Right ventricle myocardium inferior (tissue), 1 donor: ENCODE measurements at regions of chr21 and their contacts with region 1.

Region 1: GRCh38 chr21:38355992-38356797 is 99.4 kb downstream of the KCNJ15 start:
- DNase-seq: peak; percentile 92
- ATAC-seq: peak; percentile 70

Region 2: GRCh38 chr21:37675202-37675801 is 680.9 kb before region 1 on chr21:
- intact Hi-C with region 1: loop called (anchors 10 kb)
- DNase-seq: peak; percentile 81
- ATAC-seq: peak; percentile 49

Region 3: DNA sequence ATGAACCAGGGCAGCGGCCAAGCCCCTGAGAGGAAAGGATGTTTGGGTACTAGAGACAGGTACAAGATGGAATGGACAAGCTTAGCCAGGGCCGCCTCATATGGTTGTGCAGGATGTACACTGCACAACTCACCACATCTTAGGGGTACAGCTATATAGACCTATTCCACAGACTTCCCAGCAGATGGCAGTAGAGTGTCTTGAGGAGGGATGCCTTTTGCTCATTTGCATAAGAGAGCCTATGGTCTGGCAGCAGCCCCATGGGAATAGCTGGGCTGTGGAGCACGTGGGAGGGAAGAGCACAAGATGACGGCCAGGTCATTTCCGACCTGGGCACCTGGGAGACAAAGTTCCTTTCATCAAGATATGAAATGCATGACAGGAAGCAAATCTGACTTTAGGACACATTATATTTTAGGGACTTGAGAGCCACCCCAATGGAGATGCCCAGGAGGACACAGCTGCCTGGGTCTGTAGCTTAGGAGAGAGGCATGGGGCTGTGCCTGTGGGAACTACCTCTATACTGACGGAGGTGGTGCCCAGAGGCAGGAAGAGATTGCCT is 655.5 kb before region 1 on chr21:
- intact Hi-C with region 1: loop called (anchors 10 kb)
- DNase-seq: peak; percentile 60
- ATAC-seq: peak; percentile 76

Region 4: GRCh38 chr21:38159355-38159754 is 196.8 kb before region 1 on chr21:
- intact Hi-C with region 1: loop called (anchors 1 kb)
- DNase-seq: no peak
- ATAC-seq: no peak

Region 5: DNA sequence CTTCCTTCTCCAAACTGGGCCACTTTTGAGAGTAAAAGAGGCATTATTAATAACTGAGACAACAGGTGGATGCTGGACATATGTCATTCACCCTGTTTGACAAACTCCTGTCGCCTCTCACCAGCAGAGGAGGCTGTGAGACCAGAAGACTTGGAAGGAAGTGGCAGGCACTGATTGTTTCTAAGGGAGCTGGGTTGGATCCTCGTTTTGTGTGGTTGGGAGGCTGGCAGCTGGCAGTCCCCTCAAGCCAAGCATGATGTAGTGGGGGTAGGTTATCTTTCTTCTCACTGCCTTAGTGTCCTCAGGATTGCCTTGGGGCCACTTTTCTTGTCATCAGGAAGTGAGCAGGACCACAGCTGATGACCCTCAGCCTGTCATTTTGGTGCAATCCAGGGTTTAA is 185.9 kb before region 1 on chr21:
- intact Hi-C with region 1: loop called (anchors 2 kb)
- DNase-seq: no peak
- ATAC-seq: no peak

Region 6: DNA sequence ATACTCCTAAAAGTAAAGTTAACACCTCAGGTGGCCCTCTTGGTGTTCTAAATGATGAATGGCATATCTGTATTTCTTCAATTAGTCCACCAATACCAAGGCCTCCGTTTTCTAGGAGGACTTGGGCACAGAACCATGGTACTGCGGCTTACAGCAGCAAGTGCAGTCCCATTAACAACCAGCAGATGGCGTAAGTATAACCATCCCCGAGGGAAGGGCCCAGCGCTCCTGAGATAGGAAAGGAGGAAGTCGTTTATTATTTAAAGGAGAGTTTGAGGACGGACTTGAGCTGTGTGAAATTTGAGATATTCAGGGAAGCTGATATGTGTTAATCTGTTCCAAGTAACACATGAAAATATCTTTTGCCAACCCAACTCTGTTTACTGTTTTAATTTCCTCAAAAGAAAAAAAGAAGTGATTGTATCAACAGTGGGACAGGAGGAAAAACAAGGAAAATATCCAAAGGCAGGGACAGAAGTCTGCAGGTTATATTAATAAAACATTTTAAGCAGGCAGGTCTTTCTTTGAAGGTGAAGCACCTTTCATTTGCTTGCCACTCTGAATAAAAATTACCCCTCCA is 137.1 kb before region 1 on chr21:
- intact Hi-C with region 1: loop called (anchors 1 kb)
- DNase-seq: peak; percentile 89
- ATAC-seq: peak; percentile 76

Region 7: DNA sequence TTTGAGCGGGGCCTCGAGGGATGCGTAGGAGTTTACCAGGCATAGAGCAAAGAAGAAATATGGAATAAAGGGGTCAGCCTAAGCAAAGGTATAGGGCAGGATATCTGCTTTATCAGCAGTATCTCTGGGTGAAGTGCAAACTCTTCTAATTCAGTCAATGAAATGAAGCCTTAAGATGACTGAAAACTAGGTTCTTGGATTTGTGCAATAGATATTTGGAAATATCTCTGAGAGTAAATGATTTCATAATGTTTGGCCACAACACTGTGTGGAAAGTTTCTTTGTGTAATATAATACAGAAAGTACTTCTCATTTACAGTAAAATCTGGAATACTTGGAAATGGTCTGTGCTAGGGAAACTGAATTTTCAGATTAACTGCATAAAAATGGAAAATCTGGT is 73.3 kb before region 1 on chr21:
- intact Hi-C with region 1: no loop called
- DNase-seq: no peak
- ATAC-seq: peak; percentile 39

Region 8: GRCh38 chr21:38688068-38688467 is 331.9 kb after region 1 on chr21:
- intact Hi-C with region 1: no loop called
- DNase-seq: no peak
- ATAC-seq: no peak